K562 (cell line): ENCODE measurements at regions of chr7 and their contacts with region 1.

Region 1: DNA sequence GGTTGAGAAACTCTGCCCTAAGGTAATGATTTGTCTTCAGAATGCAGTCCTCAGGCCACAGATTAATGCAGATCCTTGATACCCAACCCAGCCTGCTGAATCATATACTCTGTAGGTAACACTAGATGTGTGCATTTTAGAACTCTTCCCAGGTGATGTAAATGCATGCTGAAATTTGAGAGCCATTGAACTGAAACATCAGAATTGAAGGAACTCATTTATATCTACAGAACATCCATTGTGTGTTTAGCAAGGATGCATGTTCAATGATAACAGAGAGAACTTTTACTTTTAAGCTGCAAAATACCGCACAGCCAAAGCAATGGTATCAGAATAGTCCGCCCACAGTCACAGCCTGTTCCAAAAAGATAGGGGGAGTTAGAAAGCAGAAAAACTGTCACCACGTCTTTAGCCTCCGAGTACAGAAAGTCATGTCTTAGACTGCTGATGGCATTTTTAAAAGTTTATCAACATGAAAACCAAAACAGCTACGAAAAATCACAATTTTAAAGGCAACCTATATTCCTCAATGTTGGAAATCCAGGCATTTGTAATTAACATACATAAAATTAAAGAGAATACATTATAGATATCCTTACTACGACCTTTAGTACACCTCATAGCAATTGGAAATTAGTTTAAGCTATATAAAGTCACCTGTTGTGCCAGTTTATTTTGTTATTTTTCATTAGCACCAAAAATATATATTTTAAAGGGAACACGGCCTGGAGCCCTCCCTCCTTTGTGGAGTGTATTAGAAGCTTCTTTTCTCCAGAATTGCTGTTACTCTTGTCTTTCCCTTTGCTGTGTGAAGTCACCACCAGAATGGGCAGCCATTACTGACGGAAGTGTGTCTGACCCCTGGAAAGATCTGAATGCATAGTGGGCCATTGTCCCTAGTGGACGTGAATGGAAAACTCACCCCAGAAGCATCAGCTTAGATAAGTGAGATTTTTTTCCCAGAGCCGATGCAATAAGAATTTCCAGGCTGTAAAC is 65.8 kb upstream of the PRKAR2B start:
- DNase-seq: peak; percentile 87 to 98 (median 92)
- ATAC-seq: peak; percentile 87
- H3K4me3 ChIP-seq: no peak overlapping the region
- H3K27ac ChIP-seq: peak overlapping the region; percentile 89
- H3K4me1 ChIP-seq: peaks cover 23 to 60% of the 10 kb centered on the region in 2 experiments
- H3K27me3 ChIP-seq: no peaks in the 10 kb centered on the region
- CTCF ChIP-seq: peak; percentile 57 to 68 (median 59)
- EP300 ChIP-seq: peak; percentile 98
- POLR2A ChIP-seq: peak; percentile 55; the same call in 1 of the 2 replicates
- RAD21 ChIP-seq: peak; percentile 10 to 68; a peak in 3 of 4 replicates

Region 2: DNA sequence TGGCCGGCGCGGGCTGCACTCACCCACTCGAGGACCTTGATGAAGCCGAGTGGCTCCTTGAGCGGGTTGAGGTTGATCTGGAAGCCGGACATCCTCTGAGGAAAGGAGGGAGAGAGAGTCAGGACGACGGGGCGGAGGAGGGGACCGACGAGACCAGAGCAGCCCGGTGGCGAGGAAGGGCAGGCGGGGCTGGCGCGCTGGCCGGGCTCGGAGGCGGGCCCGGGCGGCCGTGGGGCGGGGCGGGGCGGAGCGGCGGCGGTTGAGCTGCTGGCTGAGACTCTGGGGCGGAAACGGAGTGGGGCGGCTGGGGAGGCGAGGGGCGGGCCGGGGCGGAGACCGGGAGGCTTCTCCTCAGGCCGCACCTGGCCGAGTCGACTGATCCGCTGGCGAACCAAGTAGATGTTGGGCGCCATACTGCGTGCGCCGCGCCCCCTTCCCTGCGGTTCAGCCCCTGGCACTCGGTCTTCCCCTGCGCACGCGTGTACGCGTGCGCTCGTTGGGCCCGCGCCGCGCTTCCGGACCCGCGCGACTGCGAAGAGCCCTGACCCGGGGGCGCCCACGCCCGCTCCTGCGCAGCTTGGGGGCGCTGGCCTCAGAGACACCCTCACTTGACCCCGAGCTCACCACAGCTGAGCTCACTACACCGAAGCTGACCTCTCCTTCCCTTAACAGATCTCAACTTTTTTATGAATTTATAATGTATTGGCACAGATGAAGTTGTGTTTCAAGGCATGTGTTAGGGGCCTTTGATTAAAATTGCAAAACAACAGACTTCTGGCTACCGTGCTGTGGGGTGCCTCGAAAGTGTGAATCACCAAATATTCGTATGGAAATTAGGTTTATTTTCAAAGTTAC is 866.4 kb before region 1 on chr7 and contains the start of gene SYPL1:
- CTCF ChIA-PET with region 1: no interaction called
- POLR2A ChIA-PET with region 1: no interaction called
- in situ Hi-C with region 1: no loop called
- intact Hi-C with region 1: loop called (anchors 10 kb)
- DNase-seq: peak; percentile 96 to 98 (median 97)
- ATAC-seq: peak; percentile 93
- H3K4me3 ChIP-seq: peak within 1 kb of the TSS; percentile 79
- H3K27ac ChIP-seq: peak within 1 kb of the TSS; percentile 92
- H3K4me1 ChIP-seq: peaks cover 14 to 19% of the 10 kb centered on the region in 2 experiments
- H3K27me3 ChIP-seq: no peaks in the 10 kb centered on the region
- CTCF ChIP-seq: peak in 2 of 3 experiments; percentile 11 to 54; a peak in 3 of 6 replicates
- EP300 ChIP-seq: peak; percentile 27; the same call in 1 of the 2 replicates
- POLR2A ChIP-seq: peak; percentile 86
- RAD21 ChIP-seq: no peak; a peak in 2 of 4 replicates
- polyA plus RNA-seq, gene SYPL1: 171 to 214 TPM

Region 3: DNA sequence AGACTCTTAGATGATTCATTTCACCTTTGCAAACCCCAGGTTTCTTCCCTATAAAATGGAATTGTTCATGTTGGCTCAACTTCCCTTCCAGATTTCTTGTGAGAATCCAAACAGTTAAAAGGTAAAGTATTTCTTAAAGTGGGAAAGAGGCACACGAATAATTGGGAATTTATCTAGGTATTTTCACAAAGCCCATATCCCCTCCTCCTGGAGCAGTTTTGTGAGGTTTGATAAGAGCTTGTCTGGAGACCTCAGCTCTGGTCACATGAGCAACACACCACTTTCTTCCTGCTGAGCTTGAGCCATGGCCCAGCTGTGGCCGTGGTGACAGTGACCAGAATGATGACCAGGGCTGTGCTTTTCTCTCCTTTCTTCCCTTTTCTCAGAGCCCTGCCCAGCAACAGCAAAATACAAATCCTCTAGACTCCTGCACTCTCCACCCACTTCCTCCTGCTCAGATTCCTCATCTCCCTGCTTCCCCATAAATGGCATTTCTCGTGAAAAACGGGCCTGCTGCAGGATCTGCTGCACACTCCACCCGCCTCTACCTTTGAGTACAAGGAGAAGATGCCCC is 26.0 kb before region 1 on chr7:
- CTCF ChIA-PET with region 1: no interaction called
- POLR2A ChIA-PET with region 1: interaction called, 6 read pairs
- in situ Hi-C with region 1: no loop called
- intact Hi-C with region 1: loop called (anchors 1 kb)
- DNase-seq: peak; percentile 66 to 95 (median 78)
- ATAC-seq: peak; percentile 92
- H3K4me3 ChIP-seq: no peak overlapping the region
- H3K27ac ChIP-seq: peak overlapping the region; percentile 45
- H3K4me1 ChIP-seq: peaks cover 19 to 34% of the 10 kb centered on the region in 2 experiments
- H3K27me3 ChIP-seq: no peaks in the 10 kb centered on the region
- CTCF ChIP-seq: no peak
- EP300 ChIP-seq: peak; percentile 84
- POLR2A ChIP-seq: no peak
- RAD21 ChIP-seq: peak; percentile 24 to 46

Region 4: GRCh38 chr7:106999023-106999422 is 20.3 kb after region 1 on chr7:
- CTCF ChIA-PET with region 1: no interaction called
- POLR2A ChIA-PET with region 1: interaction called, 20 read pairs
- in situ Hi-C with region 1: no loop called
- intact Hi-C with region 1: no loop called
- DNase-seq: no peak
- ATAC-seq: no peak
- H3K4me3 ChIP-seq: no peak overlapping the region
- H3K27ac ChIP-seq: no peak overlapping the region
- H3K4me1 ChIP-seq: peaks cover 23 to 24% of the 10 kb centered on the region in 2 experiments
- H3K27me3 ChIP-seq: no peaks in the 10 kb centered on the region
- CTCF ChIP-seq: no peak
- EP300 ChIP-seq: no peak
- POLR2A ChIP-seq: no peak
- RAD21 ChIP-seq: no peak